ENCODE measurements at regions of chr6 and their contacts with region 1.

Region 1: GRCh38 chr6:32868257-32868788 is 14.3 kb downstream of the PSMB9 start:
- DNase-seq: peak; percentile 85 to 93 (median 87)
- H3K4me3 ChIP-seq: no peak overlapping the region
- H3K27ac ChIP-seq: no peak overlapping the region
- H3K4me1 ChIP-seq: peaks cover 11 to 21% (median 13%) of the 10 kb centered on the region in 4 experiments
- H3K27me3 ChIP-seq: peaks cover 0 to 2% (median 0%) of the 10 kb centered on the region in 5 experiments

Region 2: GRCh38 chr6:32609731-32610640 is 258.3 kb before region 1 on chr6:
- CTCF ChIA-PET with region 1: no interaction called
- POLR2A ChIA-PET with region 1: no interaction called
- DNase-seq: peak; percentile 97 to 98 (median 98)
- H3K4me3 ChIP-seq: peak overlapping the region in 6 of 7 experiments; percentile 23 to 74 (median 39)
- H3K27ac ChIP-seq: peak overlapping the region; percentile 95 to 97
- H3K4me1 ChIP-seq: peaks cover 0 to 14% (median 9%) of the 10 kb centered on the region in 4 experiments
- H3K27me3 ChIP-seq: no peaks in the 10 kb centered on the region

Region 3: GRCh38 chr6:32825966-32826365 is 42.4 kb before region 1 on chr6:
- CTCF ChIA-PET with region 1: interaction called, 44 read pairs
- POLR2A ChIA-PET with region 1: no interaction called
- DNase-seq: peak; percentile 22 to 36 (median 26)
- H3K4me3 ChIP-seq: no peak overlapping the region
- H3K27ac ChIP-seq: no peak overlapping the region
- H3K4me1 ChIP-seq: peaks cover 4 to 11% (median 8%) of the 10 kb centered on the region in 4 experiments
- H3K27me3 ChIP-seq: no peaks in the 10 kb centered on the region

Region 4: GRCh38 chr6:32838114-32838958 is 30.0 kb before region 1 on chr6 and contains the start of gene TAP2:
- CTCF ChIA-PET with region 1: interaction called, 115 read pairs
- POLR2A ChIA-PET with region 1: interaction called, 3 read pairs
- DNase-seq: peak; percentile 93 to 97 (median 96)
- H3K4me3 ChIP-seq: peak within 1 kb of the TSS; percentile 47 to 92 (median 76)
- H3K27ac ChIP-seq: peak within 1 kb of the TSS in 1 of 2 experiments; percentile 79
- H3K4me1 ChIP-seq: peaks cover 15 to 46% (median 32%) of the 10 kb centered on the region in 4 experiments
- H3K27me3 ChIP-seq: no peaks in the 10 kb centered on the region

Region 5: DNA sequence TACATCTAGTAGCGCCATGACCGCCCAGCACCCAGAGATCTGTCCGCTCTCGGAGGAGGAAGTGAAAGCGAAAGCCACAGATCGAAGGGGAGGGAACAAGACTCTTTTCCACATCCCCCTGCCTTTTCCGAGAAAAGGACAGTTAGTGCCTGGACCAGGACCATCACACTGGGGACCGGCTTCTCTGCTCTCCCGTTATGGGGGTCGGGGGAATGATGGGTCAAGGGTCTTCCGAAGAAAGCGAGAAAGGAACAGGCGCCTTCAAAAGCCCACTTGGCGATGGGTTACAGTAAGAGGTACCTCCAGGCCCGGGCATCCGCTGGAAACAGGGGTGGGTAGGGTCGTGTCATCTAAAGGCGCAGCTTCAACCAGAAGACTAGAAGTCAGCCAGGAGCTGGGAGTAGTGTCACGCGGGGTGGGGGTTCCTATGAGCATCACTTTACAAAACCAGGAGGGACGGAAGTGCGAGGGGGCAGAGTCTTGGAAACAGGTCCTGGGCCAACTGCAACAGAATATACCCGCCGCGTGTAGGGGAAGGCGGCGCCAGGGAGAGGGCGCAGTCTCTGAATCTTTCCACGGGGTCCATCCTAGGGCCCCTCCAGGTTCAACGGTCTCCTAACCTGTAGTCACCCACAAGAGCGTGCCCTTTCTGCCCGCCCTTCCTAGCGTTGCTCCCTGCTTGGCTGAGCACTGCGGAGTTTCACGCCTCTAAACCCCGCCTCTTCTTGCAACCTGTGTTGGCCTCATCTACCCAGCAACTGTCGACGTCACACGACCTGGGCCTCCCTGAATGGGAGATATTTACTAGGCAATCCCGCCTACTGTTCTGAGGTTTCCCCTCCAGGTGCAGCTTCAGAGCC is 24.1 kb before region 1 on chr6 and contains the start of gene PSMB8:
- CTCF ChIA-PET with region 1: interaction called, 115 read pairs
- POLR2A ChIA-PET with region 1: interaction called, 4 read pairs
- DNase-seq: peak; percentile 96 to 97 (median 97)
- H3K4me3 ChIP-seq: peak within 1 kb of the TSS; percentile 88 to 98 (median 94)
- H3K27ac ChIP-seq: peak within 1 kb of the TSS; percentile 80 to 92
- H3K4me1 ChIP-seq: peaks cover 23 to 71% (median 40%) of the 10 kb centered on the region in 4 experiments
- H3K27me3 ChIP-seq: no peaks in the 10 kb centered on the region

Region 6: DNA sequence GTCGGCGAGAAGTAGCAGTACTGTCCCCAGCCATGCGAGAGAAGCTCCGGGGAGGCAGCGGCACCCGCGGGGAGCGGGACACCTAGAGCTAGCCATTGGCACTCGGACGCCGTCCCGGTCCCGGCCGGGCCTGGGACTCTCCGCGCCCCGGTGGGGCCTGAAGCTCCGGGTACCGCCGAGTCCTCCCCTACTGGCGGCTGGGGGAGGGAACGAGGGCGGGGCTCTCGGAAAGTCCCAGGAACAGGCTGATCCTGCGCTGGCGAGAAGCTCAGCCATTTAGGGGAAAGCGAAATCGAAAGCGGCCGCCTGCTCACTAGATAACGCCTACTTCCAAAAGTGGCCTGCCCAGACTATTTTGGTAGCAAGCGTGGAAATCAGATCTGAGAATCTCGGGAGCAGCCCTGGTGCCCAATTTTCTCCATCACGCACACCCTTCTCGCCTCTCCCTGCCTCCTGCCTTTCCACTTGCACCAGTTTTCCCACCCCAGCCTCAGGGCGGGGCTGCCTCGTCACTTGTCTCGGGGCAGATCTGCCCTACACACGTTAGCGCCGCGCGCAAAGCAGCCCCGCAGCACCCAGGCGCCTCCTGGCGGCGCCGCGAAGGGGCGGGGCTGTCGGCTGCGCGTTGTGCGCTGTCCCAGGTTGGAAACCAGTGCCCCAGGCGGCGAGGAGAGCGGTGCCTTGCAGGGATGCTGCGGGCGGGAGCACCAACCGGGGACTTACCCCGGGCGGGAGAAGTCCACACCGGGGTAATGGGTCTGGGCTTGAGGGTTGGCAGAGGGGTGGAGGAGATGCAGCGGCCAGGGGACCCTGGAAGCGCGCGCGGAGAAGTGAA is 14.6 kb before region 1 on chr6 and contains the starts of genes PSMB9 and TAP1:
- CTCF ChIA-PET with region 1: interaction called, 85 read pairs
- POLR2A ChIA-PET with region 1: no interaction called
- DNase-seq: peak; percentile 94 to 98 (median 98)
- H3K4me3 ChIP-seq: peak within 1 kb of the TSS; percentile 88 to 97 (median 95)
- H3K27ac ChIP-seq: peak within 1 kb of the TSS; percentile 74 to 89
- H3K4me1 ChIP-seq: peaks cover 6 to 32% (median 28%) of the 10 kb centered on the region in 4 experiments
- H3K27me3 ChIP-seq: no peaks in the 10 kb centered on the region

Region 7: DNA sequence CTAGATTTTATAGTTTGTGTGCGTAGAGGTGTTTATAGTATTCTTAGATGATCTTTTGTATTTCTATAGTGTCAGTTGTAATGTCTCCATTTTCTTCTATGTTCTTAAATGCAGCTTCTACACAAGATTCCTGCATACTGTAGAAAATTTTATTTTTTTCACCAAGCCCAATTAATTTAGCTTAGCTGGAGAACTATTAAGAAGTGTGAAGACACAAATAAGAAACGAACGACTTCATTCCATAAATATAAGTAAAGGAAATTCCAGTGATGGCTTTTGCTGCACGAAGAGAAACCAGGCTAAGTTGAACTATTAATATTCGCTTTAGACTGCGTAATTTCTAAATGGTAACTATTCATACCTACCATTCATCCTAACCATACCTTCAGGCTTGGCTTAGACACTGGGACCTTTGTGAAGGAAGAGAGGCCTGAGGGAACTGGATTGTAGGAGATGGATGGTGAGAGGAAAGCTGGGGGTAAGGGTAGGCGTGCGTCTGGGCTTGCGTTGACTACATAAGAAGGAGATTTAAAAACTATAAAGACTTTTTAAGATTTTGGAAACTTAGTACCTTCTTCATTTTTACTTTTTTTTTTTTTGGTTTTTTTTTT is 125.1 kb after region 1 on chr6:
- CTCF ChIA-PET with region 1: no interaction called
- POLR2A ChIA-PET with region 1: no interaction called
- DNase-seq: no peak
- H3K4me3 ChIP-seq: no peak overlapping the region
- H3K27ac ChIP-seq: no peak overlapping the region
- H3K4me1 ChIP-seq: no peaks in the 10 kb centered on the region
- H3K27me3 ChIP-seq: peaks cover 0 to 3% (median 0%) of the 10 kb centered on the region in 5 experiments

Measured in common myeloid progenitor, CD34-positive (primary cell).